Aorta (tissue), 5 donors: ENCODE measurements at regions of chr19 and their contacts with region 1.

Region 1: DNA sequence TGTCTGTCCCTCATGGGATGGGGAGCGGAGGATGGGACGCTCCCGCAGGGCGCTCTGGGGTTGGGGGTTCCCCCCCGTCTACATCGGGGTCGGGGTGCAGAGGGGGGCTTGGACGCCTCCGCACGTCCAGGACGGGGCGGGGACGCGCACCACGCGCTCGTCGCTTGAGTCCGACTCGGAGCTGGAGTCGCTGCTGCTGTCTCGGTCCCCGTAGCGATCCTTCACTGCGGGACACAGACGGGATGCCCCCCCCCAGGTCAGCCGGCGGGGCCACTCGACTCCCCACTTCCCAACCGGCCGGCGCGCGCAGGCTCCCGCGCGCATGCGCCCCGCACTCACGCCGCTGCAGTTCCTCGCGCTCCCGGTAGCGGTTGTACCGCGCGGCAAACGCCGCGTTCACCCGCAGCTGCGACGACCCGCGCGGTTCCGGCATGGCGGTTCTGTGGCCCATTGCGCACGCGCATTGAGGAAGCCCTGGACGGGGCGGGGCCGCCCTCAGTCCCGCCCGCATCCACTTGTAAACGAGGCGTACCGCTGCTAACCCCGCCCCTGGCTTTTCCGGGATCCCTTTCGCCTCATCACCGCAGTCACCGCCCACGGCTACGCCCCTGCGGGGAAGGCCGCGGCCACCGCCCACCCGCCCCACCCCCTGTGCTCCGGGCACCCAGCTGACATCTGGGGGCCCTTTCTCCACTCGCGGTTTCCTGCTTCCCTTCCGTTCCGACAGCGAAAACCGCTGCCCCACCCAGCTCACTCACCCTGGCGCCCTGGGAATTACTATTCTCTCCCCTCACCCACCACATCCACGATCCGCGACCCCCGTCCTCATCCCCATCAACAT is at the start of gene KRI1:
- DNase-seq: peak; percentile 99 to 100
- ATAC-seq: peak; percentile 91
- H3K4me3 ChIP-seq: peak within 1 kb of the TSS; percentile 51 to 59
- H3K27ac ChIP-seq: peak within 1 kb of the TSS in 1 of 2 donors; percentile 54
- H3K4me1 ChIP-seq: no peaks in the 10 kb centered on the region
- H3K27me3 ChIP-seq: no peaks in the 10 kb centered on the region
- total RNA-seq, gene KRI1: 15.8 to 18.9 TPM

Region 2: GRCh38 chr19:10478903-10479384 is 86.8 kb before region 1 on chr19:
- intact Hi-C with region 1: loop called in 1 of 2 experiments (anchors 5 kb)
- DNase-seq: peak; percentile 94 to 96
- ATAC-seq: peak; percentile 95
- H3K4me3 ChIP-seq: peak overlapping the region in 1 of 2 donors; percentile 44
- H3K27ac ChIP-seq: no peak overlapping the region
- H3K4me1 ChIP-seq: no peaks in the 10 kb centered on the region
- H3K27me3 ChIP-seq: no peaks in the 10 kb centered on the region

Region 3: DNA sequence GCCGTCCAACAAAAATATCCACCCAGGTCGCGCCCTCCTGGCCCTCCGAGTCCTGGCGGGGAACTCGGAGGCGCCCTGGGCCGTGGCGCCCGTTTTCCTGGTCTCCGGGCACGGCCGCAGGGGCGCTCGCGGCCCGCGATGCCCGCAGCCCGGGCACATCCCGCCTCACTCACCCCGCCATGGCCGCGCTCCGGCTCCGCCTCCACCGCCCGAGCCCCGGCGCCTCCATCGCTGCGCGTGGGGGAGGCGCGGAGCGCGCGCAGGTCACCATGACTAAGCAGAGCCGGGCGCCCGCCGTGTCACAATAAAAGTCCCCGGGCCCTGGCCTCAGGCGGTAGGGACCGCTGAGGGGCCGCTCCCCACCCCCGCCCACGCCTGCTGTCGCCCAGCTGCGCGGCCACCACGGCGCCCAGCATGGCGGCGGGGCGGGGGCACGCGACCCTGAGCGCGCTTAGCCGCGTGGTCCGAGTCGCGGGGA is 63.2 kb before region 1 on chr19:
- intact Hi-C with region 1: loop called in 1 of 2 experiments (anchors 5 kb)
- DNase-seq: peak; percentile 96 to 98
- ATAC-seq: peak; percentile 97
- H3K4me3 ChIP-seq: peak overlapping the region; percentile 70 to 77
- H3K27ac ChIP-seq: peak overlapping the region; percentile 47 to 88
- H3K4me1 ChIP-seq: no peaks in the 10 kb centered on the region
- H3K27me3 ChIP-seq: no peaks in the 10 kb centered on the region

Region 4: DNA sequence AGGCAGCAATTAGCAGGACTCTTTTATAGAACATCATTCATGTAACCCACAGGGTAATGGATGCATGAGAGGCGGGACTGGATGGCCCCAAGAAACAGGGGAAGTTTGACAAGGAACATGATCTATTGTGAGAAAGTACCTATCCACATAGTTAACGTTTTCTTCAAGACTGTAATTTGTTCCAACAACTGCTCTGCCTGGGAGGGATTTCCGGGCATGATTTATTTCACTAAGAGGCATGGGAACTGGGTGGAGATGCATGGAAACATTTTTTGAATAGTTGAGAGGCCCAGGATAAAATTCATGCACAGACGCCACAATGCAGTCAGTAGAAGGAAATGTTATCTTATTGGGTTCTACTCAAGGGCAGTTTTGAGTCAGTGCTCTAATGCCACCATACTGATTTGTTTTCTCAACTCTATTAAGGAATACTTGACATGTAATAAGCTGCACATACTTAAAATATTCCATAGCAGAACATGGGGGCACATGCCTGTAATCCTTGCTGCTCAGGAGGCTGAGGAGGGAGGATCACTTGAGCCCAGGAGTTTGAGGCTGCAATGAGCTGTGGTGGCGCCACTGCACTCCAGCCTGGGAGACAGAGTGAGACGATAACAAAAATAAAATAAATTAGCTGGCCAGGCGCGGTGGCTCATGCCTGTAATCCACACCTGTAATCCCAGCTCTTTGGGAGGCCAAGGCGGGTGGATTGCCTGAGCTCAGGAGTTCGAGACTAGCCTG is 32.0 kb before region 1 on chr19:
- intact Hi-C with region 1: no loop called
- DNase-seq: no peak
- ATAC-seq: peak; percentile 22
- H3K4me3 ChIP-seq: no peak overlapping the region
- H3K27ac ChIP-seq: peak overlapping the region in 1 of 2 donors; percentile 26
- H3K4me1 ChIP-seq: no peaks in the 10 kb centered on the region
- H3K27me3 ChIP-seq: no peaks in the 10 kb centered on the region

Region 5: GRCh38 chr19:10593820-10594637 is 28.2 kb after region 1 on chr19:
- intact Hi-C with region 1: no loop called
- DNase-seq: no peak
- ATAC-seq: no peak
- H3K4me3 ChIP-seq: no peak overlapping the region
- H3K27ac ChIP-seq: no peak overlapping the region
- H3K4me1 ChIP-seq: no peaks in the 10 kb centered on the region
- H3K27me3 ChIP-seq: no peaks in the 10 kb centered on the region